Activated CD4-positive, alpha-beta memory T cell treated with anti-CD3 and anti-CD28 coated beads for 36 hours (primary cell): ENCODE measurements at regions of chr15 and their contacts with region 1.

Region 1: GRCh38 chr15:41493205-41493901 is at the start of gene ITPKA:
- DNase-seq: peak; percentile 95
- H3K4me3 Mint-ChIP-seq: peak within 1 kb of the TSS; percentile 67
- H3K27ac Mint-ChIP-seq: peak within 1 kb of the TSS; percentile 61
- H3K4me1 Mint-ChIP-seq: peaks cover 36% of the 10 kb centered on the region
- H3K27me3 Mint-ChIP-seq: peaks cover 31% of the 10 kb centered on the region
- total RNA-seq, gene ITPKA: 3.5 to 4.7 TPM

Region 2: GRCh38 chr15:41331833-41332787 is 161.2 kb before region 1 on chr15 and contains the start of gene OIP5:
- CTCF ChIA-PET with region 1: no interaction called
- POLR2A ChIA-PET with region 1: no interaction called
- intact Hi-C with region 1: loop called (anchors 5 kb)
- DNase-seq: peak; percentile 99
- H3K4me3 Mint-ChIP-seq: peak within 1 kb of the TSS; percentile 99
- H3K27ac Mint-ChIP-seq: peak within 1 kb of the TSS; percentile 97
- H3K4me1 Mint-ChIP-seq: peaks cover 23% of the 10 kb centered on the region
- H3K27me3 Mint-ChIP-seq: no peaks in the 10 kb centered on the region
- total RNA-seq, gene OIP5: 11.1 to 13.0 TPM

Region 3: DNA sequence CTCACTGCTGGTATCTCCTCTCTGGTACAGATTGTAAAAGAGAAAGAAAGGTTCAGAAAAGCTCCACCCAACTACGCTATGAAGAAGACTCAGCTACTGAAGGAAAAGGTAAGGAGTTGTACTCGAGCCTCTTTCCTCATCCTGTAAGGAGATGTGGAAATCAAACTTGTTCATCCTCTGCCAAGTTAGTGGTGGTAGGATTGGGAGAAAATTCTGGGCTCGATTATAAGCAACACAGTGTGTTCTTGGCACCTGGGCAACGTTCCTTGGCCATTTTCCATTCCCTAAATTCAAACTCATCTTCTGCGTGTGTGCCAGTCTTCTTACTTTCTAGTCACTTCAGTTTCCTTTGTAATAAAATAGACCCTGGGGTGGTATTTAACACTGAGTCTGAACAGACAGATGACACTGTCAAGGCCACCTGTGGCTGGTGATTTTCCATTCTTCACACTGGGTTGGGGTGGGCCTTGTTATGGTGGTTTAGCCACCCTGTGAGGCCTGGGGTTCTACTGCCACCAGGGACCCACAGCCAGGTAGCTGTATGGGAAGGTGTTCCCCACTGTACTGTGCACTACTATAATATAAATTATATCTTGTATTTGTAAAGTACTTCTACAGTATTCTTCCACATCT is 16.8 kb before region 1 on chr15:
- CTCF ChIA-PET with region 1: no interaction called
- POLR2A ChIA-PET with region 1: no interaction called
- intact Hi-C with region 1: loop called (anchors 2 kb)
- DNase-seq: no peak
- H3K4me3 Mint-ChIP-seq: no peak overlapping the region
- H3K27ac Mint-ChIP-seq: no peak overlapping the region
- H3K4me1 Mint-ChIP-seq: peaks cover 6% of the 10 kb centered on the region
- H3K27me3 Mint-ChIP-seq: no peaks in the 10 kb centered on the region

Region 4: GRCh38 chr15:41621200-41622193 is 128.1 kb after region 1 on chr15:
- CTCF ChIA-PET with region 1: no interaction called
- POLR2A ChIA-PET with region 1: no interaction called
- intact Hi-C with region 1: loop called (anchors 2 kb)
- DNase-seq: peak; percentile 90
- H3K4me3 Mint-ChIP-seq: peak overlapping the region; percentile 76
- H3K27ac Mint-ChIP-seq: peak overlapping the region; percentile 69
- H3K4me1 Mint-ChIP-seq: peaks cover 16% of the 10 kb centered on the region
- H3K27me3 Mint-ChIP-seq: no peaks in the 10 kb centered on the region

Region 5: DNA sequence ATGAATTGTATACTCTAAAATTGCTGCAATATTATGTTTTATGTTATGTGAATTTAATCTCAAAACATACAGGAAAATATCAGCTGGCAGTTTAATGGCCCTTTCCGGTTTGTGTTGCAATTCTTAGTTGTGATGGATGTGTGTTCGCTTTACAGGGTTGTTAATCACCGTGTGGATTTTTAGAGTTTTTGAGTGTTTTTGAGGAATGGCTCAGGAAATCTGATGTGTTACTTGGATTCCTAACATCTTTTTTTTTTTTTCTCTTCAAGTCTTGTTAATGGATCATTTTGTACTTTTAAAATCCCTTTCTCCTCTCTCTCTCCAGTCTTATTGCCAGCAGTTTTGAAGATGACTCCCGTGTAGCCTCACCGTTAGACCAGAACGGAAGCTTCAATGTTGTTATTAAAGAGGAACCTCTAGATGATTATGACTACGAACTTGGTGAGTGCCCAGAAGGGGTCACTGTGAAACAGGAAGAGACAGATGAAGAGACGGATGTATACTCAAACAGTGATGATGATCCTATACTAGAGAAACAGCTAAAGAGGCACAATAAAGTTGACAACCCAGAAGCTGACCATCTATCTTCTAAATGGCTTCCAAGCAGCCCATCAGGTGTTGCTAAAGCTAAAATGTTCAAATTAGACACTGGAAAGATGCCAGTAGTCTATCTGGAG is 202.5 kb after region 1 on chr15:
- CTCF ChIA-PET with region 1: no interaction called
- POLR2A ChIA-PET with region 1: no interaction called
- intact Hi-C with region 1: loop called (anchors 10 kb)
- DNase-seq: peak; percentile 66
- H3K4me3 Mint-ChIP-seq: peak overlapping the region; percentile 10
- H3K27ac Mint-ChIP-seq: peak overlapping the region; percentile 70
- H3K4me1 Mint-ChIP-seq: peaks cover 47% of the 10 kb centered on the region
- H3K27me3 Mint-ChIP-seq: no peaks in the 10 kb centered on the region